Activated naive CD4-positive, alpha-beta T cell treated with anti-CD3 and anti-CD28 coated beads for 36 hours (primary cell): ENCODE measurements at regions of chr22 and their contacts with region 1.

Region 1: DNA sequence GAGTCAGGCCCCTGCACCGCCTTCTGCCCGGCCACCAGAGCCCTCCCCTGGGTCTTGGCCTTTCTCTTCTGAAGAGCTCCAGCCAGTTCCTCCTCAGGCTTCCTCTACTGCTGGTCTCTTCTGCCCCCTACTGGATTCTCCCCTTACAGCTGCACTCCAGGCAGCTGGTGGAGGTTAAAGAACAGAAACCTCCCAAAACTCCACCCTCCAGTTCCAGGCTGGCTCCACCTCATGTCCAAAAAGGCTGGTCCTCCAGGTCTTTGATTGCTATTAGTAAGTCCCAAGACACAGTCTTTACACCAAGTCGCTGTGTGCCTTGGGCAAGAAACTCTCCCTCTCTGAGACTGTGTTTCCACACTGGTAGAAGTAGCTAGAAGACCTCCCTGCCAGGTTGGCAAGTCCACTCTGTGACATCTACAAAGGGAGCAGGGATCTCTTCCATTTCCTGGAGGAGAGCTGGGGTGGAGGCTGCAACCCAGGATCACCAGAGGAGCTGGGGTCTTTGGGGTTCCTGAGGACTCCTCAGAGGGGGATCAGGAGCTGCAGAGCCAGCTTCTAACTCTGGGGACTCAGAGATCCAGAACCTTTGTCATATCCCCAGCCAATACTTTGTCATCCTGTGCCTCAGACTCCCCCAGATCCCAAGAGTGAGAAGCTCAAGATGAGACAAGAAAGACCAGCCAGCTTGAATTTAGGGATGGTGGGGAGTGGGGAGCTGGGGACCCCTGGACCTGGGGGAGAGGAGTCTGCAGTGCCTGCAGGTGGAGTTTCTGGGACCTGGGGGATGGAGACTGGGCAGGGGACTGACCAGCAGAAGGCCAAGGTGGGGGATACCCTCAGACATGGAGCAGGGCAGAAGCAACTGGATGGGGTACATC is 3.4 kb upstream of the IGLL5 start:
- DNase-seq: peak; percentile 79
- H3K4me3 Mint-ChIP-seq: no peak overlapping the region
- H3K27ac Mint-ChIP-seq: no peak overlapping the region
- H3K4me1 Mint-ChIP-seq: peaks cover 7% of the 10 kb centered on the region
- H3K27me3 Mint-ChIP-seq: no peaks in the 10 kb centered on the region

Region 2: GRCh38 chr22:22753526-22754267 is 130.6 kb before region 1 on chr22:
- CTCF ChIA-PET with region 1: interaction called, 30 read pairs
- intact Hi-C with region 1: loop called (anchors 1 kb)
- DNase-seq: peak; percentile 87
- H3K4me3 Mint-ChIP-seq: no peak overlapping the region
- H3K27ac Mint-ChIP-seq: no peak overlapping the region
- H3K4me1 Mint-ChIP-seq: peaks cover 19% of the 10 kb centered on the region
- H3K27me3 Mint-ChIP-seq: no peaks in the 10 kb centered on the region

Region 3: GRCh38 chr22:22810018-22810427 is 74.2 kb before region 1 on chr22:
- CTCF ChIA-PET with region 1: interaction called, 120 read pairs
- intact Hi-C with region 1: loop called (anchors 2 kb)
- DNase-seq: peak; percentile 80
- H3K4me3 Mint-ChIP-seq: no peak overlapping the region
- H3K27ac Mint-ChIP-seq: no peak overlapping the region
- H3K4me1 Mint-ChIP-seq: peaks cover 12% of the 10 kb centered on the region
- H3K27me3 Mint-ChIP-seq: no peaks in the 10 kb centered on the region

Region 4: DNA sequence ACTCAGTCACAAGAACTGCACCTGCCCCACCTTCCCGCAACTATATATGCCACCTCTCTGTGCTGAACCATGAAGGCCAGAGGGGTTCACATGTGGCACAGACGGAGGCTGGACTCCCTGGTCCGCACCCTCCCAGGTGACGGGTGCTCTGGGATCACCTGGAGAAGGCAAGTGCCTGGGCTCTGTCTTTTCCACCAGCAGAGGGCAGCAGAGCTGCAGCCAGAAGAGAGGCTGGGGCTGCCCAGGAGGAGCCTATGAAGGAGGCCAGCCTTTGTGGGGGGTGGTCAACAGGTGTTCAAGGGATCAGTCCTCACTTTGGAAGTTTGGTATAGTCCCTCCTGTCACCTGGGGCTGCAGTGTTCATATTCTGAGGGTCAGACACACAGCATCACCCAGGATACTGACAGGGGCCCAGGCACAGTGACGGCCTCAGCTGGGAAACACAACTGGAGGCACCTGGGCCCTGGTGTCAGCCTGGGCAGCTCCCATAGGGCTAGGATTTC is 35.8 kb before region 1 on chr22:
- CTCF ChIA-PET with region 1: interaction called, 82 read pairs
- intact Hi-C with region 1: no loop called
- DNase-seq: peak; percentile 84
- H3K4me3 Mint-ChIP-seq: no peak overlapping the region
- H3K27ac Mint-ChIP-seq: no peak overlapping the region
- H3K4me1 Mint-ChIP-seq: peaks cover 31% of the 10 kb centered on the region
- H3K27me3 Mint-ChIP-seq: no peaks in the 10 kb centered on the region

Region 5: DNA sequence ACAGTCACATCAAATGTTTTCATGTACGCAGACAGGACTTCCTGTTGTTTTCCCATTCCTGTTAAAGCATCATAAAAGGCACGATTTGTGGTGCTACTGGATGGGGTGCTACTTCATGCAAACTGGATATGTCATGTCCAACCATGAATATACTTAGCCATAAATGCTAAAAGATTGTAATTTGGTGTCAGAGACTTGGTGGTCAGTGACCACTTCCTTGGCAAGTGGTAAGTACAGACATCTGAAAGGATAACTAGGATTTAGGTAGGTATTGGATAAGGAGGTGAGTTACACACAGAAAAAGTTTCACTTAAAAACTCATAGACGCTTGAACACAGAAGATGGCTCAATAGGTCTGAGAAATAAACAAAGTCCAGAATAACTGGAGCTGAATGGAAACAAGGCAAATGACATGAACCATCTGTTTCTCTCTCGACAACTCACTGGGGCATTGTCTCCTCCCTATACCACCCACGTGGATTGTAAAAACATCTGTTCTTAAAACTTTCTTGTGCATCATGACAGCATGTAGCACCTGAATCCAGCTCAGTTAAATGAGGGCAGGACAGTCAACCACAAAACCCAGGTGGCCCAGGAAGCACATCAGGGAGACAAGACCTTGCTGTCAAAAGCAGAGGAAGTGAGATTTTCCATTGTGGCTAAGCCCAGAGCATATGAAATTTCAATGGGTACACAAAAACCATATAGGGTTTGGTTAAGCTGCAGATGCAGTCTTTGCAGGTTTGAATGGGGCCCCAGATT is 18.8 kb before region 1 on chr22:
- CTCF ChIA-PET with region 1: interaction called, 12 read pairs
- intact Hi-C with region 1: no loop called
- DNase-seq: peak; percentile 62
- H3K4me3 Mint-ChIP-seq: no peak overlapping the region
- H3K27ac Mint-ChIP-seq: no peak overlapping the region
- H3K4me1 Mint-ChIP-seq: peaks cover 37% of the 10 kb centered on the region
- H3K27me3 Mint-ChIP-seq: no peaks in the 10 kb centered on the region

Region 6: DNA sequence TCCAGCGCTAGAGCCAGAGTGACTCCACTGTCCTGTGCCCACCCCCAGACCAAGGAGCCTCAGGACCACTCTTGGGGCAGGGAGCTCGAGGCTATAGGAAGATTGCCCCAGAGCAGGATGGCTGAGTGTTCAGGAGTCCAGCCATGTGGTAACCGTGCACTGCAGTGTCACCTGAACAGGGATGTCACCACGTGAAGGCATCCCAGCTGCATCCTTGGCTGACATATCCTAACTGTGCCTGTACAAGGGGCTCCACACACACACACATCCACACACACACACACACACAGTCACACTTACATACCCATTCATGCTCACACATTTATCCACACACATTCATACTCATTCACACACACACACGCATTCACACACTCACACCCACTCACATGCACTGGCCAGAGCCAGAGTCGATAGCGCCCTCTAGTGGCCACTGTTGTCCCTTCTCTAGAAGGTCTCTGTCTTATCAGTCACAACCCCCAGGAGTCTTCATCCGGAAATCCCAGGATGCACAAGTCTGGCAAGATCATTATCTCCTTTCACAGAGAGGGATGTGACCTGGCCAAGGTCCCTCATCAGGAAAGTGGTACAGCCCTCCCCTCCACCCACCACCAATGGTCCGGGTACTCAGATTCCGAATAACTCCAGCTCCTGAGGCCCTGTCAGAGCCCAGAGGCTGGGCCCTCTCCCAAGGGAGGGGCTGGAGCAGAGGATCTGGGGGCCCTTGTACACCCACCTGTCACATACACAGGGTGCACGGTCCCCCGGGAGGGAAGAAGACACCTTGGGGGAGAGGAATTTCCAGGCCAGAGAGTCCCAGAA is 58.5 kb after region 1 on chr22:
- CTCF ChIA-PET with region 1: interaction called, 15 read pairs
- intact Hi-C with region 1: loop called (anchors 5 kb)
- DNase-seq: peak; percentile 89
- H3K4me3 Mint-ChIP-seq: no peak overlapping the region
- H3K27ac Mint-ChIP-seq: no peak overlapping the region
- H3K4me1 Mint-ChIP-seq: peaks cover 1% of the 10 kb centered on the region
- H3K27me3 Mint-ChIP-seq: peaks cover 2% of the 10 kb centered on the region